Left ventricle myocardium superior (tissue), 1 donor: ENCODE measurements at regions of chr12 and their contacts with region 1.

Region 1: DNA sequence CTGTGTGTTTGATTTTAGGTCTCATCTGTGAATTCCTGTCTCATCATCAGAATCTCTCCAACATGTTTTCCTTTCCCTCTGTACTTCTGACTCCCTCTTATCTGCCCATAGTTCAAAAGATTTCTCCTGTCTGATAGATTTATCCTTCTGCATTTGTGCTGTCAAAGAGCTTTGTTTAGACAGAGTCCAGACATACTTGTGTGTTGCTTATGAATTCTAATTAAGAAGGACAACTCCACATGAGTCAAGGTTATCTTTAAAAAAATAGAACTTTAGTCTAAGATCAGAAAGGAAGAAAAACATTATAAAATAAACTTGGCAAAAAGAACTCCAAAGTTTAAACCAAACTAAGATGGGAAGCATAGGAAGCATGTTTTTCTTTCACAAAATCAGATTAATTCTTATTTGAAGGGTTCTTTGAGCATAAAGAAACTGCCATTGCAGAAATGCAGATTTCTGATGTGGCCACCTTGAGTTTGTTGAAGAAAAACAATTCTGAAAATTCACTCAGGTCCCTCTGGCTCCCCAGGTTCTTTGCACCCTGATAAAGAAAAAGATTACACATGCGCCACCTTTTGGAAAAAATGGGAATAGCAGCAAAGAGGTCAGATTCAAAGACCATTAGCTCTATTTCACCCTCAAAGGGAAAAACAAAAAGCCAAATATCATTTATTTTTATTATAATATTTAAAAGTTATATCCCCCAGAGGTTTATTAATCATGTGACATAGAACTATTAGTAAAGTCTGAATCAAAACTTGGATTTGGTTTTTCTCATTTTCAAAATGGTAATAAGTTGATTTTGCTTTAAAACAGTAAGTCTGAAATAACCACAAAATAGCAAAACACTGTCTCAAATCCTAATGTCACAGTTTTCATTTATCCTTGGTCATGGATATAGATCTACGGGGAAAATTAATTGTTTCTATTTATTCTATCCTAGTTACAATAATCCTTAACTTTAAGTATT is 143.7 kb upstream of the DCN start:
- DNase-seq: no peak
- ATAC-seq: peak; percentile 72

Region 2: DNA sequence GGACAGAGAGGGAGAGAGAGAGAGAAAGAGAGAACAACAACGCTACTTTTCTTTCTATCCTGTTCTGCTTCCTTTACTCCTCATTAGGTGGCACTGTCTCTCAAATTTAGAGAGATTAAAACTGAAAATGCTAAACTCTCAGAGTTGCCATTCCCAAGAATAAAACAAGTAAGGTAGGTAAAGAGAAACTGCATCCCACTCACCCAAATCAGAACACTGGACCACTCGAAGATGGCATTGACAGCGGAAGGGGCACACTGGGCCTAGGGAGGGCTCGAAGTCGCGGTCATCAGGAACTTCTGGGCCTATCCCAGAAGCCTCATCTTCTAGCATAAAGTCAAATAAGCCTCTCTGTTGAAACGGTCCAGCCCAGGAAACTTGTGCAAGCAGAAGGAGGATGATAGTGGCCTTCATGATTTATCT is 148.2 kb before region 1 on chr12:
- intact Hi-C with region 1: loop called (anchors 10 kb)
- DNase-seq: no peak
- ATAC-seq: peak; percentile 47